Activated naive CD4-positive, alpha-beta T cell treated with anti-CD3 and anti-CD28 coated beads for 36 hours (primary cell): ENCODE measurements at regions of chr19 and their contacts with region 1.

Region 1: DNA sequence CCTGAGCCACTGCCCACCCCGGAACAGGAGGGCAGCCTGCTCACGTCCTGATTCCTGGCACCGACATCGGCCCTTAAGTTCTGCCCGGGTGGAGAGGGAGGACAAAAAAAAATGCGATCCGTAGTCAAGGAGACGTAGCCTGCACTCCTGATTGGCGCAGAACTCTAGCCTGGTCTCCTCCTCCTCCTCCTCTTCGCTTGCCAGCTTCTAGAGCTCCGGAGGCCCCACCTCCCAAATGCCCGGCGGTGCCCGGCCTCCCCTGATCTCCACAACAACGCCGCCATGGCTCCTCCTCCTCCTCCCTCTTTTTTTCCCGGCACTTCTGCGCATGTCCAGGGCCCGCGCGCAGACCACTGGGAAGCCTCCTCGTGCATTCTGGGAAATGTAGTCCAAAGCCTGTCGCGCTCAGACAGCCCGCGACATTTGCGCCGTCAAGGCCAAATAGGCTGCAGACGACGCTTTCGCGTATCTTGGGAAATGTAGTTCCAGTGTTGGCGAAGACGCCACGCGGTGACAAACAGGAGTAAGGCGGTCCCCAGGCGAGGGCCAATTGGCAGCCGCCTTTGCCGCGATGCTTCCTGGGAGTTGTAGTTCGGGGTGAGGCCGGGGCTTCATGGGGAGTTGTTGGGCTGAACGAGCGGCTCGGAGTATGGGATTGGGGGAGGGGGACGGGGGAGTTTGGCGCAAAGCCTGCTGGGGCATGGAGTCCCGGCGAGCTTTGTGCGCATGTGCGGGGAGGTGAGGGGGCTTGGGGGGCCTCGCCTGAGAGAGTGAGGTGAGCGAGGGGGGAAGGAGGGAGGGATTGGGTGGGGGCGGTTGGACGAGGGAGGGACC is at the start of gene ZNF444:
- DNase-seq: peak; percentile 99
- H3K4me3 Mint-ChIP-seq: peak within 1 kb of the TSS; percentile 97
- H3K27ac Mint-ChIP-seq: peak within 1 kb of the TSS; percentile 95
- H3K4me1 Mint-ChIP-seq: peaks cover 35% of the 10 kb centered on the region
- H3K27me3 Mint-ChIP-seq: no peaks in the 10 kb centered on the region
- total RNA-seq, gene ZNF444: 17.8 to 21.4 TPM

Region 2: DNA sequence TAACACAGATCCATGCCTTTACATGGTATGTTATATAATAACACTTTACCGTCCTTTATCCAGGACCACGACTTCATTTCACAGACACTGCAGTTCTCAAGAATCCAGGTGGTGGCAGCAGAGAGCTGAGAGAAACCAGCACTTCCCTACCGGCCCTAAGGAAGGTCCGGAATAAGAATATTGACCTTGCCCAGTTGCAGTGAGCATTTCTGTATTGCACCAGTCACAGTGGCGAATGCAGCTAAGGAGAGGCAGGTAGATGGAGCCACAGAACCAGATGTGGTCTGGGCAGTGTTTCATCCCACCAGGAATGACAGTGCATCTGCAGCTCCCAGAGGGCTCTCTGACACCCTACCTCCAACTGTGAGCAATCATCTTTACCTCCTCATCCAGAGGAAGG is 64.3 kb before region 1 on chr19:
- CTCF ChIA-PET with region 1: no interaction called
- intact Hi-C with region 1: no loop called
- DNase-seq: peak; percentile 56
- H3K4me3 Mint-ChIP-seq: no peak overlapping the region
- H3K27ac Mint-ChIP-seq: no peak overlapping the region
- H3K4me1 Mint-ChIP-seq: peaks cover 9% of the 10 kb centered on the region
- H3K27me3 Mint-ChIP-seq: peaks cover 16% of the 10 kb centered on the region

Region 3: DNA sequence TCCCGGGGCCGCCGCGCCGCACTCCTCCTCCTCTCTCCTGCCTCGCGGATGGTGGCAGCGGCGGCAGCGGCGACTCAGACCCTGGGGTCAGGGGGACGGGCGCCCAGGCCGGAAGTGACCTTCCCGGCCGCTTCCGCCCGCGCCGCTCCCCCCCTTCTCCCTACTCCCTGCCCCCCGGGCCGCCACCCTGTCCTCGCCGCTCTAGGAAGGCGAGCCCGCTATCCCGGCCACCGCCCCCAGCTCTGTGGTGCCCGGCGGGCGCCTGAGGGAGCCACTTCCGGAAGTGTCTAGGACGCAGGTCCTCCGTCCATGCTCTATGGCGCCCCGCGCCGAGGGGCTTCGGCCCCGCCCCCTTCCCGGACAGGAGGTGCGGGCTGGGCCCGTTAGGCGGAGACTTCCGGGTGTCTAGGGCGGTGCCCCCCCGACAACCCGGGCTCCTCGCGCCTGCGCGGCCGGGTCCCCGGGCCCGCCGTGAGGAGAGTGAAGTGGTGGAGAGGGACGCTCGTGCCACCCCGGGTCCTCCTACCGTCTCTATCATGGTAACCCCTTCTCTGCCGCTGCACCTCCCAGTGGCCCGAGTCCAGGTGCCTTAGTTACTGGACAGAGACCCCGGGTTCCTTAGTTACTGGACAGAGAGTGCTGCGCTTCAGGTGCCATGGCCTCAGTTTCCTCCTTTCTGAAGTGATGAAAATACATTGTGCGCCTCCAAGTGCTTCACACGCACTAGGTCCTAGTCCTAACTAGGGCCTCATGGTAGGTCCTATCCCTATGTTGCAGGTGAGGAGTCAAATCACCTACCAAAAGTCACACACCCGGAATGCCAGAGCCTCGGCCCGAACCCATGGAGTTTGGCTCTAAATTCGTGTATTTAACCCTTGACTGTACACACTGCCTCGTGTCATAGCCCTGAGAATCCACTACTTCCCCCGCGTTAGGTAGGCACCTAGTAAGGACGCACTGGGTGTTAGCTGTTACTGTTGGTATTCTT is 19.3 kb before region 1 on chr19 and contains the start of gene ZNF787:
- CTCF ChIA-PET with region 1: no interaction called
- intact Hi-C with region 1: loop called (anchors 1 kb)
- DNase-seq: peak; percentile 95
- H3K4me3 Mint-ChIP-seq: peak within 1 kb of the TSS; percentile 86
- H3K27ac Mint-ChIP-seq: peak within 1 kb of the TSS; percentile 94
- H3K4me1 Mint-ChIP-seq: peaks cover 52% of the 10 kb centered on the region
- H3K27me3 Mint-ChIP-seq: no peaks in the 10 kb centered on the region
- total RNA-seq, gene ZNF787: 24.2 to 26.1 TPM

Region 4: GRCh38 chr19:56162258-56162657 is 21.5 kb after region 1 on chr19:
- CTCF ChIA-PET with region 1: no interaction called
- intact Hi-C with region 1: loop called (anchors 2 kb)
- DNase-seq: peak; percentile 74
- H3K4me3 Mint-ChIP-seq: no peak overlapping the region
- H3K27ac Mint-ChIP-seq: peak overlapping the region; percentile 65
- H3K4me1 Mint-ChIP-seq: peaks cover 8% of the 10 kb centered on the region
- H3K27me3 Mint-ChIP-seq: peaks cover 3% of the 10 kb centered on the region